Naive thymus-derived CD4-positive, alpha-beta T cell (primary cell): ENCODE measurements at regions of chr22 and their contacts with region 1.

Region 1: DNA sequence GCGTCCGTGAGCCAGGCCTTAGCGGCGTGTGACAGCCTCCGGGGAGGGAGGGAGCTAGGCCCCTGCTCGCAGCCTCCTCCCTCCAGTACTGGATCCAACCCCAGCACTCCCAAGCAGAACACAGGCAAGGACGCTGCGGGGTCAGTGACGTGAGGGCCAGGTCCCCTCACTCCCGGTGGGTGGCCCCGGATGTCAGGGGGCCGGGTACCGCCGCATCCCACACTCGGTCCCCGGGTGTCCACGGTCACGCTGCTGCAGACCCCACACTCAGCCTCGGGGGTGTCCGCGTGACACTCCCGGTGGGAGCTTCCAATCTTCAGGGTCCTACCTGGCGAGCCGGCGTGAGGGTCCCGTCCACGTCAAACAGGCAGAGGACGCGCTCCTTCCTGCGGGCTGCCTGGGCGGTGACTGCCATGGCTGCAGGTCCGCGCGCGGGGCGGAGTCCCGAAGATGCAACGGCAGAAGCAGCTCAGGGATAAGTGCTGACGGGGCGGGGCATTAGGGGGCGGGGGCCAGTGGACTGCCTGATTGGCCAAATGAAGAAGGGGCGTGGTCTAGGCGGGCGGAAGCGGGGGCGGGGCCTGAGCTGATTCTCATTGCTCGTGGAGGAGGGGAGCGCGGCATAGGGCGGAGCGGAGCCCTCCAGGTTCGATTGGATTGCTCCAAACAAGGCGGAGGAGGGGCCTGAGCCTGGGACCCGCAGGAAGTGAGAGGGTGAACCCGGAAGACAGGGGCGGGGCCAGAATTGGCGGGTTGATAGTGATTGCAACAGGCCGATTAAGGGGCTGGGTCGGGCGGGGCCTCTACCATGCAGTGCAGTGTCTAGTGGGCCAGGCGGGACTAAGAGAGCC is at the start of gene PMM1:
- DNase-seq: peak; percentile 97 to 100 (median 100)
- ATAC-seq: peak; percentile 99
- H3K4me3 ChIP-seq: peak within 1 kb of the TSS; percentile 97
- H3K4me3 Mint-ChIP-seq: peak within 1 kb of the TSS; percentile 76 to 96 (median 93)
- H3K27ac ChIP-seq: peak within 1 kb of the TSS; percentile 79
- H3K27ac Mint-ChIP-seq: peak within 1 kb of the TSS; percentile 81 to 93 (median 86)
- H3K4me1 ChIP-seq: peaks cover 9 to 11% of the 10 kb centered on the region in 2 donors
- H3K4me1 Mint-ChIP-seq: peaks cover 5 to 28% (median 22%) of the 10 kb centered on the region in 7 donors
- H3K27me3 ChIP-seq: no peaks in the 10 kb centered on the region
- H3K27me3 Mint-ChIP-seq: no peaks in the 10 kb centered on the region
- total RNA-seq, gene PMM1: 22.5 to 34.3 (median 26.9) TPM

Region 2: DNA sequence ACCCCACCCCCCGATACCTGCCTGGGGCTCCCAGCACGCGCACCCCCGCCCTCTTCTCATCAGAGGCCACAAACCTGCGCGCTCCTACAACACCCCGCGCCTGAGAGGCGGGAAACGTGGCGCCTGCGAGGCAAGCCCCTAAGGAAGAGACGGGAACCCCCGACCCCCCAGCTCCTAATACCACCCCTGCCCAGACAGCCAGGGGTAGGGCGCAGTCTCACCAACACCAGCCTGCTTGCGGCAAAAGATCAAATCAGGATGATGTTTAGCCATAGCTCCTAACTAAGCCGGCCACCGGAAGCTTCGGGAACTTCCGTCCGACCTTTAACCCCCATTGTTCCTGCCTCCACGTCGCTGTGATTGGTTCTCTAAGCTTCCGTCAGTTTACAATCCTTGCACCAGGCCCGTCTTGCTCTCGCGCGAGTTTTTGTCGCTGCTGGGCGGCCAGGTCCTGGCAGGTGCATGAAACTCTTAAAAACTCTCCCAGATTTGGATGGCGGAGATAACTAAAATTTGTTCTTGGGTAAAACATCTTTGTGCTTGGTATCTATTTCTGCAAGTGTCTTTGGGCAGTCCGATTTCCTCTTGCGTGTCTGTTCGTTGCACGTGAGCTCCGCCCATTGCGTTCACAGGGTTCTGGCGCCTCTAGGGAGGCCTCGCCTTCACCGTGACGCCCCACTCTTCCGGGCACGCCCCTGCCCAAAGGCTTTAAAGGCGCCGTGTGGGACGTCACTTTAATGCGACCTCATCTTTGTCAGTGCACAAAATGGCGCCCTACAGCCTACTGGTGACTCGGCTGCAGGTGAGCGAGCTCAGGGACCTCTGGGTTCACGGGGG is 121.0 kb before region 1 on chr22 and contains the starts of genes ACO2 and PHF5A:
- CTCF ChIA-PET with region 1: no interaction called
- POLR2A ChIA-PET with region 1: interaction called, 13 read pairs
- intact Hi-C with region 1: loop called (anchors 1 kb)
- DNase-seq: peak; percentile 93 to 99 (median 98)
- ATAC-seq: peak; percentile 96
- H3K4me3 ChIP-seq: peak within 1 kb of the TSS; percentile 76
- H3K4me3 Mint-ChIP-seq: peak within 1 kb of the TSS; percentile 88 to 94 (median 91)
- H3K27ac ChIP-seq: peak within 1 kb of the TSS; percentile 89
- H3K27ac Mint-ChIP-seq: peak within 1 kb of the TSS; percentile 98 to 100 (median 99)
- H3K4me1 ChIP-seq: peaks cover 19 to 20% of the 10 kb centered on the region in 2 donors
- H3K4me1 Mint-ChIP-seq: peaks cover 18 to 75% (median 59%) of the 10 kb centered on the region in 7 donors
- H3K27me3 ChIP-seq: no peaks in the 10 kb centered on the region
- H3K27me3 Mint-ChIP-seq: no peaks in the 10 kb centered on the region
- total RNA-seq, gene ACO2: 64.5 to 84.8 (median 70.3) TPM
- total RNA-seq, gene PHF5A: 27.8 to 63.9 (median 36.0) TPM

Region 3: DNA sequence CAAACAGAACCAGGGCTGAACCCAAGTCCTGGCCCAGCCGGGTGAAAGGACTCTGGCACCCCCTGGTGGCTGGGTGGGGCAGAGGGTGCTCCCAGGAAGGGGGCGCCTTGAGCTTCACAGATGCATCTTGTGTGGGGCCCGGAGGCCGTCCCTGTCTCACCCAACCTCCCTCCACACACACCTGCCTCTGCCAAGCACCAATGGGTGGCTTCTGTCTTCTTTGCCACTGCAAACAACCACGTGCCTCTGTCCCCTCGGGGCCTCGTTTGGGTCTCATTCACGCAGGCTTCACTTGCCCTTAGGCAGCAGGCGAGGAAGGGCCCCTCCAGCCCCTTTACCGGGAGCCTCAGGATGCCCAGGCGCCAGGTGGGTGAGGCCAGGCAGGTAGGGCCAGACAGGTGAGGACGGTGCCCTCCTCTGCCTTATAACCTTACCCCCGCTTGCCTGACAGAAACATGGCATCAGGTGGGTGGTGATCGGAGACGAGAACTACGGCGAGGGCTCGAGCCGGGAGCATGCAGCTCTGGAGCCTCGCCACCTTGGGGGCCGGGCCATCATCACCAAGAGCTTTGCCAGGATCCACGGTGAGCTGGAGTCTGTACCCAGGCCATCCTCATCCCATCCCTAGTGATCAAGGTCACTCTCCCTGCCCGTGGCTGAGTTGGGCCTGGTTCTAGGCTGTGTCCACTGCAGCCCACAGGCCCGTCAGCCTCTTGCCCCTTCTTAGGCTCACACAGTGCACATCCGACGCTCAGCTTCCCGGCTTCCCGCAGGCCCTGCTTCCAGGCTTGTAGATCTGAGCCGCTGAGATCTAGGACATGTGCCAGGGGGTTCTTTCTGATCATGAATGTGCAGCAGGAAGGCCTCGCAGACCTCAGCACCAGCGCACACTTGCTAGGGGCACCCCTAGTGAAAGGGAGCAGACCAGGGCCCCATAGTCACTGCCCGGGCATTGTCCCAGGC is 62.5 kb before region 1 on chr22:
- CTCF ChIA-PET with region 1: no interaction called
- POLR2A ChIA-PET with region 1: no interaction called
- intact Hi-C with region 1: loop called in 1 of 2 experiments (anchors 1 kb)
- DNase-seq: peak; percentile 36 to 75 (median 64)
- ATAC-seq: peak; percentile 78
- H3K4me3 ChIP-seq: no peak overlapping the region
- H3K4me3 Mint-ChIP-seq: no peak overlapping the region
- H3K27ac ChIP-seq: peak overlapping the region; percentile 48
- H3K27ac Mint-ChIP-seq: peak overlapping the region in 7 of 9 donors; percentile 40 to 84 (median 77)
- H3K4me1 ChIP-seq: peaks cover 10 to 16% of the 10 kb centered on the region in 2 donors
- H3K4me1 Mint-ChIP-seq: peaks cover 0 to 25% (median 20%) of the 10 kb centered on the region in 7 donors
- H3K27me3 ChIP-seq: no peaks in the 10 kb centered on the region
- H3K27me3 Mint-ChIP-seq: no peaks in the 10 kb centered on the region

Region 4: DNA sequence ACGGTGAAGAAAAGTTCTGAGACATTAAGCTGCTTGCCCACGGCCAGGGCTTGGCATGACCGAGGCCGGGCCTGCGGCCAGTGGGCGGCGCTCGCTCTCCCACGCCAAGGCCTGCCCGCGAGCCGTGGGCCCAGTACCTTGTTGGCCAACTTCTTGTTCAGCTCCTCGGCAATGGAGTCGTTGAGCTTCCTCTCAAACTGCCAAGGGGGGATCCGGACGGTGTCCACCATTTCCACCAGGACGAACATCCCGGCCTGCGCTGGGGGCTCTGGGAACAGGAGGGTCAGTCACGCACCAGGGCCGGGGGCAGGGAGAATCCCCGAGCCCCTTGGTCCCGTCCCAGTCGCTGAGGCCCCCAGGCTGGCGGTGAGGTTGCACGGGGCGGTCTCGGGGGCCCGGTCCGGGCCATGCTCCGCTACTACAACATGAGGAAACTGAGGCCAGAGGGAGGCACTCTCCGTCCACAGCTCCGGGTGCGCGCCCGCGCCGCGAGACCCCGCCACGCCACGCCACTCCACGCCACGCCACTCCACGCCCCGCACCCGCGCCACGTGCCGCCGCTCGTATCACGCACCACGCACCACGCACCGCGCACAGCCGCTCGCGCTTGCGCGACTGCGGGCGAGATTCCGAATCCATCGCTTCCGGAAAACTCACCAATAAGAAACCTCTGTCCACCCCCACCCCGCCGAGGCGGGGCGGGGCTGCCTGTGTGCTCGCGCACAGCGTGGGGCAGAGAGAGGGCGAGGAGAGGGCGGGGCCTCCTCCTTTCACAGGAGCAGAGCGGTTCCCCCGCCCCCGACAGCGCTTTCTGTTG is 45.6 kb before region 1 on chr22 and contains the start of gene POLR3H:
- CTCF ChIA-PET with region 1: no interaction called
- POLR2A ChIA-PET with region 1: interaction called, 10 read pairs
- intact Hi-C with region 1: loop called (anchors 1 kb)
- DNase-seq: peak; percentile 89 to 97 (median 95)
- ATAC-seq: peak; percentile 100
- H3K4me3 ChIP-seq: peak within 1 kb of the TSS; percentile 96
- H3K4me3 Mint-ChIP-seq: peak within 1 kb of the TSS; percentile 82 to 100 (median 97)
- H3K27ac ChIP-seq: peak within 1 kb of the TSS; percentile 84
- H3K27ac Mint-ChIP-seq: peak within 1 kb of the TSS; percentile 88 to 98 (median 95)
- H3K4me1 ChIP-seq: peaks cover 7 to 15% of the 10 kb centered on the region in 2 donors
- H3K4me1 Mint-ChIP-seq: peaks cover 30 to 52% (median 45%) of the 10 kb centered on the region in 7 donors
- H3K27me3 ChIP-seq: no peaks in the 10 kb centered on the region
- H3K27me3 Mint-ChIP-seq: no peaks in the 10 kb centered on the region
- total RNA-seq, gene POLR3H: 21.7 to 59.6 (median 28.5) TPM

Region 5: GRCh38 chr22:41576877-41577276 is 12.7 kb before region 1 on chr22:
- CTCF ChIA-PET with region 1: no interaction called
- POLR2A ChIA-PET with region 1: no interaction called
- intact Hi-C with region 1: loop called in 1 of 2 experiments (anchors 1 kb)
- DNase-seq: peak in 5 of 9 donors; percentile 10 to 31 (median 22)
- ATAC-seq: peak; percentile 67
- H3K4me3 ChIP-seq: no peak overlapping the region
- H3K4me3 Mint-ChIP-seq: no peak overlapping the region
- H3K27ac ChIP-seq: no peak overlapping the region
- H3K27ac Mint-ChIP-seq: no peak overlapping the region
- H3K4me1 ChIP-seq: no peaks in the 10 kb centered on the region
- H3K4me1 Mint-ChIP-seq: peaks cover 0 to 5% (median 0%) of the 10 kb centered on the region in 7 donors
- H3K27me3 ChIP-seq: no peaks in the 10 kb centered on the region
- H3K27me3 Mint-ChIP-seq: no peaks in the 10 kb centered on the region

Region 6: DNA sequence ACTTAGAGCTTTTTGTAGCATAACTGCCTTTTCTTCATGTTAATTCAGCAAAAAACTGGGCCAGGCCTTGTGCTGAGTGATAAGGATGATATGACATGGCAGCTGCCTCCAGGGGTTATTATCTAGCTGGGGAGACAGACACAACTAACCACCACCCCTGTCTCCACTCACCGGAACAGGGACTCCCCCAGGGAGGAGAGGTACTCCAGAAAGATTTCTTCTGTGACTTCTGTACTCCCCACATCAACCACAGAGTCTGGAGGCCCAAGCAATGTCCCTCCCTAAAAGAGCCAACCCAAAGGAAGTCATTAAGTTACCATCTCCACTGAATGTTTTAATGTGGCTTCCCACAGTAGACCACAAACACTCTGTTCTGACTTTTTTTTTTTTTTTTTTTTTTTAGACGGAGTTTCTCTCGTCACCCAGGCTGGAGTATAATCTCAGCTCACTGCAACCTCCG is 14.3 kb after region 1 on chr22:
- CTCF ChIA-PET with region 1: no interaction called
- POLR2A ChIA-PET with region 1: interaction called, 4 read pairs
- intact Hi-C with region 1: loop called in 1 of 2 experiments (anchors 2 kb)
- DNase-seq: peak in 8 of 9 donors; percentile 12 to 68 (median 36)
- ATAC-seq: peak; percentile 96
- H3K4me3 ChIP-seq: no peak overlapping the region
- H3K4me3 Mint-ChIP-seq: peak overlapping the region in 1 of 10 donors; percentile 17
- H3K27ac ChIP-seq: no peak overlapping the region
- H3K27ac Mint-ChIP-seq: peak overlapping the region in 8 of 9 donors; percentile 18 to 73 (median 47)
- H3K4me1 ChIP-seq: peaks cover 0 to 19% of the 10 kb centered on the region in 2 donors
- H3K4me1 Mint-ChIP-seq: peaks cover 13 to 37% (median 21%) of the 10 kb centered on the region in 7 donors
- H3K27me3 ChIP-seq: no peaks in the 10 kb centered on the region
- H3K27me3 Mint-ChIP-seq: peaks cover 0 to 11% (median 0%) of the 10 kb centered on the region in 5 donors

Region 7: GRCh38 chr22:41666661-41667258 is 77.1 kb after region 1 on chr22:
- CTCF ChIA-PET with region 1: no interaction called
- POLR2A ChIA-PET with region 1: no interaction called
- intact Hi-C with region 1: loop called in 1 of 2 experiments (anchors 1 kb)
- DNase-seq: peak; percentile 88 to 97 (median 95)
- ATAC-seq: peak; percentile 98
- H3K4me3 ChIP-seq: peak overlapping the region; percentile 44
- H3K4me3 Mint-ChIP-seq: peak overlapping the region; percentile 75 to 87 (median 82)
- H3K27ac ChIP-seq: peak overlapping the region; percentile 72
- H3K27ac Mint-ChIP-seq: peak overlapping the region; percentile 91 to 99 (median 97)
- H3K4me1 ChIP-seq: peaks cover 7% of the 10 kb centered on the region in 2 donors
- H3K4me1 Mint-ChIP-seq: peaks cover 0 to 25% (median 10%) of the 10 kb centered on the region in 7 donors
- H3K27me3 ChIP-seq: no peaks in the 10 kb centered on the region
- H3K27me3 Mint-ChIP-seq: no peaks in the 10 kb centered on the region

Region 8: GRCh38 chr22:42134100-42135020 is 544.7 kb after region 1 on chr22:
- CTCF ChIA-PET with region 1: no interaction called
- POLR2A ChIA-PET with region 1: no interaction called
- intact Hi-C with region 1: no loop called
- DNase-seq: no peak
- ATAC-seq: no peak
- H3K4me3 ChIP-seq: no peak overlapping the region
- H3K4me3 Mint-ChIP-seq: no peak overlapping the region
- H3K27ac ChIP-seq: no peak overlapping the region
- H3K27ac Mint-ChIP-seq: no peak overlapping the region
- H3K4me1 ChIP-seq: no peaks in the 10 kb centered on the region
- H3K4me1 Mint-ChIP-seq: peaks cover 0 to 2% (median 0%) of the 10 kb centered on the region in 7 donors
- H3K27me3 ChIP-seq: no peaks in the 10 kb centered on the region
- H3K27me3 Mint-ChIP-seq: no peaks in the 10 kb centered on the region